ENCODE measurements at regions of chr11 and their contacts with region 1.

Region 1: GRCh38 chr11:125123947-125124617 is 12.7 kb upstream of the TMEM218 start:
- DNase-seq: no peak
- H3K4me3 ChIP-seq: peak overlapping the region in 1 of 4 experiments; percentile 10; a peak in 1 of 8 replicates
- H3K27ac ChIP-seq: no peak overlapping the region
- H3K4me1 ChIP-seq: no peaks in the 10 kb centered on the region
- H3K27me3 ChIP-seq: peaks cover 0 to 6% (median 2%) of the 10 kb centered on the region in 4 experiments; a peak in 4 of 7 replicates
- CTCF ChIP-seq: peak; percentile 54 to 84 (median 69)
- EP300 ChIP-seq: no peak
- POLR2A ChIP-seq: no peak
- RAD21 ChIP-seq: peak; percentile 32 to 47

Region 2: DNA sequence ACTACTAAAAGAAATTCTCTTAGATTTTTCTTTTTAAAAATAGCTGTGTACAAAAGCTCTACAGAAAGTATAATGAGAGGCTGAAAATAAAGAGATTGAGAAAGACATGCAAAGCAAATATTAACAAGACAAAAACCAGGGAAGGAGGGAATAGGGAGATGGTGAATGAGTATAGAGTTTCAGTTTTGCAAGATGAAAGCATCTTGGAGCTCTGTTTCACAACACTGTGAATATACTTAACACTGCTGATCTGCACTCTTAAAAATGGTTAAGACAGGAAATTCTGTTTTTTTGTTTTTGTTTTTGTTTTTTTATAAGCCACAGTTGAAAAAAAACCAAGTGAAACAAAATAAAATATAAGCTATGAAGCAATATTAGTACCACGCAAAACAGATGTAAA is 18.2 kb before region 1 on chr11:
- CTCF ChIA-PET with region 1: interaction called, 65 read pairs
- POLR2A ChIA-PET with region 1: no interaction called
- DNase-seq: no peak
- H3K4me3 ChIP-seq: 0 out of 8 replicates have a peak overlapping the region, but pooled peaks of 1 of the 4 experiments have one; percentile 10
- H3K27ac ChIP-seq: no peak overlapping the region
- H3K4me1 ChIP-seq: peaks cover 0 to 3% (median 3%) of the 10 kb centered on the region in 4 experiments; a peak in 4 of 7 replicates
- H3K27me3 ChIP-seq: no peaks in the 10 kb centered on the region
- CTCF ChIP-seq: no peak
- EP300 ChIP-seq: no peak
- POLR2A ChIP-seq: no peak
- RAD21 ChIP-seq: no peak

Region 3: DNA sequence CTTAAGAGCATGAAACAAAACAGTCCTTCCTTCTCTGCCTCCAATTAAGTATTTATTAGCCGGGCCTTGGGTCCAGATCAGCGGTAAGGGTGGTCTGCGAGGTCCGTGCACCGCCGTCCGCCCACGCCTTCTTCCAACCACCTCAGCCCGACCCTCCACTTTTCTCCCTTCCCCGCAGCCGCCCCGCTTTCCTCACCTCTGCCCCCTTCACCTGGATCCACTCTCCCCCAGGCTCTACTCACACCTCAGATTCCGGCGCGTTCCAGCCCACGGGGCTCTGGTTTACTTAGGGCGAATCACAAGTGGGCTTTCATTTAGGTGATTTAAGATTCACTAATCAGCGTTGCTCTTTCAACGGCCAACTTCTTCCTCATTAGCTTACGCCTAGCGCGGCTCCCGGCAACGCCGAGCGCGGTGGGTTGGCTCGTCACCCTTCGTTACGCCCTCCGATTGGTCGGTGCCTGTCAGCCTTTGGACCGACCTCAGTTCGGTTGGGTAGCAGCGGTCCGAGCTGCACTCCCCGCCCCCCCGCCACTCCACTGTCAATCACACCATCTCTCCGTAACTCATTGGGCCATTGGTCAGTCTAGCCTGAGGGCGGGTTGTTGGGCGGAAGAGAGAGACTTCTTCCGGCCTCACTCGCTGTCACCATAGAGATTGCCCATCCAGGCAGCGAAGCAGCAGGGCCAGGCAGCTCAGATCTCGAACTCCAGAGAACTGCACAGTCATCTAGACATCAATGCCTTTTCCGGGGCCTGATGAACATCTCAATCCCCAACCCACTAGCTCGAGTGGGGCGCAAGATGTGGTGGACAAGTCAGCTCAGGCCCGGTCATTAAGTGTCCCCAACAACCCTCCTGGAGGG is 12.5 kb before region 1 on chr11 and contains the start of gene TMEM218:
- CTCF ChIA-PET with region 1: interaction called, 65 read pairs
- POLR2A ChIA-PET with region 1: interaction called, 5 read pairs
- DNase-seq: peak; percentile 92 to 99
- H3K4me3 ChIP-seq: peak within 1 kb of the TSS; percentile 59 to 80 (median 76)
- H3K27ac ChIP-seq: peak within 1 kb of the TSS; percentile 63
- H3K4me1 ChIP-seq: peaks cover 2 to 6% (median 3%) of the 10 kb centered on the region in 4 experiments; a peak in 3 of 7 replicates
- H3K27me3 ChIP-seq: no peaks in the 10 kb centered on the region
- CTCF ChIP-seq: no peak
- EP300 ChIP-seq: no peak
- POLR2A ChIP-seq: no peak
- RAD21 ChIP-seq: no peak
- total RNA-seq, gene TMEM218: 17.0 and 17.3 TPM in 2 replicates

Region 4: DNA sequence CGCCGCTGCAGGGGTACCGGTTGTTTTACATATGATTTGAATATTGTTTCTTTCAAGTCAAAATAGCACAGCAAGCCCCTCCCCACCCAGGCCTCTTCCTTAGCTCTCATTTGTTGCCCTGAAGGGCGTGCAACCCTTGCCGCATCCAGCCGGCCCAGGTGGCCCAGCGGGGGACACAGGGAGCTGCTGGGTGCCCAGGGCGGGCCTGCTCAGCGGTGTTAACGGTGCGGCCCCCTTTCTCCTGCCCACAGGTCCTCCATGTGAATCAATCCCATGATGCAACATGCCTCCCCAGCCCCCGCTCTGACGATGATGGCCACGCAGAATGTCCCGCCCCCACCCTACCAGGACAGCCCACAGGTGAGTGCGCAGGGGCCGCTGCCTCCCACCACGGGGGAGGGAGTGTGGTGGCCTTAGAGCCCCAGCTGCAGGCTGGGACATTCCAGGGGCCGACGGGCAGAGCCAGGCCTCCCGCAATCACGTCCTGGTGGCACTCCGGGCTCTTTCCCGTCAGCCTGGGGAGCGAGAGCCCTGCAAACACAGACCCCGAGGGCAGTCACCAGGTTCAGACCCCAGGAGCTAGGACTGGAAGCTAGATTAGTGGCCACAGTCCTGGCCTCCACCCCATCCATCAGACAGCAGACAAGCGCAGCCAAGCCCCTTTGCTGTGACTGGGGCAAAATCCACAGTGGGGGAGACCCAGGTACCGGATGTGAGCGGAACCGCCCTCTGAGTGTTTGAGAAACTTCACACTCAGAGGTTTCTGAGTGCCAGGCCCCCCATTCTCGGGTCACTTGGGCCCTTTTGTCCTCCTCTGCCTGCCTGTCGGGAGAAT is 227.2 kb after region 1 on chr11:
- CTCF ChIA-PET with region 1: interaction called, 11 read pairs
- POLR2A ChIA-PET with region 1: no interaction called
- DNase-seq: no peak
- H3K4me3 ChIP-seq: no peak overlapping the region
- H3K27ac ChIP-seq: no peak overlapping the region
- H3K4me1 ChIP-seq: peaks cover 0 to 22% (median 10%) of the 10 kb centered on the region in 4 experiments; a peak in 6 of 7 replicates
- H3K27me3 ChIP-seq: peaks cover 0 to 9% (median 1%) of the 10 kb centered on the region in 4 experiments; a peak in 2 of 7 replicates
- CTCF ChIP-seq: no peak
- EP300 ChIP-seq: no peak
- POLR2A ChIP-seq: no peak
- RAD21 ChIP-seq: no peak

Region 5: DNA sequence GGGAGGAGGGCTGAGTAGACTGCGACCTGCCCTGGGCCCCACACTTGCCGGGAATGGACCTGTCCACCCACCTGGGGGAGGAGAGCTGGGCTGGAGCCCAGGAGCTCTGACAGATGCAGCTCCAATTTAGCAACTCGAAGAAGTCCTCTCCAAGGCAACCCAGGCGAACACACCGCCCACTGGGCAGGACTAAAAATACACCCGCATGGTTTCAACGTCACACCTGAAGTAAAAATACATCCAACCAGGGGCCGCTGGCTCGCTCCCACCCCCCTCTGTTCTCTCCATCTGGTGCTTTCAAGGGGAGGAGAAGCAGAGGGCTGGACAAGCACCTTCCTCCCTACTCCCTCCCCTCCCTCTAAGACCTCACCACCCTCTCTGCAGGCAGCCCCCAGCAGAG is 252.0 kb after region 1 on chr11:
- CTCF ChIA-PET with region 1: interaction called, 10 read pairs
- POLR2A ChIA-PET with region 1: no interaction called
- DNase-seq: no peak
- H3K4me3 ChIP-seq: no peak overlapping the region
- H3K27ac ChIP-seq: no peak overlapping the region
- H3K4me1 ChIP-seq: peaks cover 12 to 25% (median 22%) of the 10 kb centered on the region in 4 experiments
- H3K27me3 ChIP-seq: peaks cover 0 to 4% (median 0%) of the 10 kb centered on the region in 4 experiments; a peak in 2 of 7 replicates
- CTCF ChIP-seq: no peak
- EP300 ChIP-seq: no peak
- POLR2A ChIP-seq: no peak
- RAD21 ChIP-seq: no peak